Natural killer cell (primary cell): ENCODE measurements at regions of chr11 and their contacts with region 1.

Region 1: DNA sequence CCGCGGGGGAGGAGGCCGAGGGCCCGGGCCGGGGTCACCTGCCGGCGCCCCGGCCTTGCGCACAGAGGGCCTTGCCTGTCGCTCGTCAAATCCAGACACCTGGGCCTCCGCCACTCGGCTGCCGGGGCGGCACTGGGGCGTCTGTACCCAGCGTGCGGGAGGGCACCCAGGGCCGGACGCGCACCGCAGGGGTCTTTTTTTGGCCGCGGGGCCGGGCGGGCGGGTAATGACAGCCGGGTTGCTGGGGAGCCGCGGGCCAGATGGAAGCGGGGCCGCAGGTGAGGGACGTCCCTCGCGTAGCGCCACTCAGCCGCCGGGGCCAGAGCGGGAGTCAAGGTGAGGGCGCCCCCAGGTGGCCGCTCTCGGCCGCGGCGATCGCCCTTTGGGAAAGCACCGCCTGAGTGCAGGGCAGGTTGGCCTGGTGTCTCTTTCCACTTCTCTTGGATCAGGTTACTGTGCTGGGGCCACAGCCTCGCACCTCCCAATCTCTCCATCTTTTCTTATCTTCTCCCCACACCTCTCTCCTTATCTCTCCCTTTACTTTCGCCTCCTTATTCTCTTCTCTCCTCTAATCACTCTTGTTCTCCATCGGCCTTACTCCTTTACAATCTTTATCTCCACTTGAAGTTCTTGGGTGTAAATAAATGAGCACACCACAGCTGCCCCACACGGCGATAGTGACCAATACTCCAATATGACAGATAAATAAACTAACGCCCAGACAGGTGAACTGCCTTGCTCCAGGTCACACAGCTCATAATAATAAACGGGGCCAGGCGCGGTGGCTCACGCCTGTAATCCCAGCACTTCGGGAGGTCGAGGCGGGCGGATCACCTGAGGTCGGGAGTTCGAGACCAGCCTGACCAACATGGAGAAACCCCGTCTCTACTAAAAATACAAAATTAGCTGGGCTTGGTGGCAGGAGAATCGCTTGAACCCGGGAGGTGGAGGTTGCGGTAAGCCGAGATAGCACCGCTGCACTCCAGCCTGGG is 3.7 kb downstream of the PHLDB1 start:
- DNase-seq: peak; percentile 87 to 92
- ATAC-seq: peak; percentile 46 to 72 (median 65)
- H3K4me3 ChIP-seq: no peak overlapping the region
- H3K4me3 Mint-ChIP-seq: peak overlapping the region; percentile 62
- H3K27ac ChIP-seq: no peak overlapping the region
- H3K27ac Mint-ChIP-seq: peak overlapping the region in 1 of 2 donors; percentile 50
- H3K4me1 ChIP-seq: peaks cover 37% of the 10 kb centered on the region
- H3K4me1 Mint-ChIP-seq: peaks cover 23 to 34% of the 10 kb centered on the region in 2 donors
- H3K27me3 ChIP-seq: peaks cover 8% of the 10 kb centered on the region
- H3K27me3 Mint-ChIP-seq: peaks cover 8 to 31% of the 10 kb centered on the region in 2 donors
- CTCF ChIP-seq: peak; percentile 86

Region 2: DNA sequence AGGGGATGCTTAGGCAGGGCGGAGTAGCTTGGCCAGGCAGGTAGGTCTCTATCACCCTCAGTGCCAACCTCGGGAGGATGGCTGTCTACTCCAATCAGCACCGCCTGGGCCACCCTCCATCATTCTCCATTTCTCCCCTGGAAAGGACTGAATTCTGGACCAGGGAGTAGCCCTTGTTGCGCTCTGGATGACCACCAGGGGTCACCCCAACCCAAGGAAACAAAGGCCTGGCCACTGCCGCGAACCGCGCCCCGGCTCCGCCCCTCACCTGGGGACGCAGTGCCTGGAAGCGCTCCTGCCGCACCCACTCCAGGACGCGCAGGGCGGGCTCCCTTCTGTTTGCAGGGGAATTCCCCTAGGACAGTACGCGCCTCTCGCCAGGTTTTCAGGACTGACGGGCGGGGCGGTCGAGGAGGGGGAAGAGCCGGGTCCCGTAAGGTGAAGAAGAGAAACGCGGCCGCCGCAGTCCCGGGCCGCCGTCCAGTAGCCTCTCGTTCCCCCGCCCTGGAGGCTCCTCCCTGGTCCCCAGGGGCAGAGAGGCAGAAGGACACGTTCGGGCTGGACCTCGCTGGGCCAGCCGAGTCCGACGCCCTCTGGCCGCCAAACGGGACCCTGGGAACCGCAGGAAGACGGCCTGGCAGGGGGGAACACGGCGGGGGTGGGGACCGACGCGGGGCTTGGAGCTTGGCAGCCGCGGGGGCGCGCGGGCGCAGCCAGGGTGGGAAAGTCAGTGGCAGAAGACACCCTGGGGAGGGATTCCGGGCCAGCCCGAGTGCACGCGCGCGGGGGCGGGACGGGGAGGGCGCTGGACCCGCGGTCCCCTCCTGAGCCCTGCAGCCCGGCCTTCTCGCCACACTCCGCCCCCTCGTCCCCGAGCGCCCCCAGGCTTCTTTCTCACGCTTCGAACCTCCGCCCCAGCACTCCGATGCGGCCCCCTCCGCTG is 465.5 kb before region 1 on chr11:
- intact Hi-C with region 1: loop called (anchors 2 kb)
- DNase-seq: peak; percentile 69 to 93
- ATAC-seq: peak; percentile 88 to 95 (median 94)
- H3K4me3 ChIP-seq: peak overlapping the region; percentile 63
- H3K4me3 Mint-ChIP-seq: peak overlapping the region; percentile 82
- H3K27ac ChIP-seq: no peak overlapping the region
- H3K27ac Mint-ChIP-seq: no peak overlapping the region
- H3K4me1 ChIP-seq: peaks cover 10% of the 10 kb centered on the region
- H3K4me1 Mint-ChIP-seq: peaks cover 0 to 4% of the 10 kb centered on the region in 2 donors
- H3K27me3 ChIP-seq: peaks cover 2% of the 10 kb centered on the region
- H3K27me3 Mint-ChIP-seq: peaks cover 47 to 72% of the 10 kb centered on the region in 2 donors
- CTCF ChIP-seq: peak; percentile 89

Region 3: GRCh38 chr11:118572061-118572980 is 38.8 kb before region 1 on chr11 and contains the start of gene ARCN1:
- intact Hi-C with region 1: loop called (anchors 5 kb)
- DNase-seq: peak; percentile 68 to 90
- ATAC-seq: peak; percentile 83 to 91 (median 89)
- H3K4me3 ChIP-seq: peak within 1 kb of the TSS; percentile 77
- H3K4me3 Mint-ChIP-seq: peak within 1 kb of the TSS; percentile 95
- H3K27ac ChIP-seq: peak within 1 kb of the TSS; percentile 98
- H3K27ac Mint-ChIP-seq: peak within 1 kb of the TSS; percentile 89 to 97
- H3K4me1 ChIP-seq: peaks cover 14% of the 10 kb centered on the region
- H3K4me1 Mint-ChIP-seq: peaks cover 46 to 47% of the 10 kb centered on the region in 2 donors
- H3K27me3 ChIP-seq: no peaks in the 10 kb centered on the region
- H3K27me3 Mint-ChIP-seq: no peaks in the 10 kb centered on the region
- CTCF ChIP-seq: no peak
- total RNA-seq, gene ARCN1: 72.9 to 88.6 (median 88.4) TPM

Region 4: DNA sequence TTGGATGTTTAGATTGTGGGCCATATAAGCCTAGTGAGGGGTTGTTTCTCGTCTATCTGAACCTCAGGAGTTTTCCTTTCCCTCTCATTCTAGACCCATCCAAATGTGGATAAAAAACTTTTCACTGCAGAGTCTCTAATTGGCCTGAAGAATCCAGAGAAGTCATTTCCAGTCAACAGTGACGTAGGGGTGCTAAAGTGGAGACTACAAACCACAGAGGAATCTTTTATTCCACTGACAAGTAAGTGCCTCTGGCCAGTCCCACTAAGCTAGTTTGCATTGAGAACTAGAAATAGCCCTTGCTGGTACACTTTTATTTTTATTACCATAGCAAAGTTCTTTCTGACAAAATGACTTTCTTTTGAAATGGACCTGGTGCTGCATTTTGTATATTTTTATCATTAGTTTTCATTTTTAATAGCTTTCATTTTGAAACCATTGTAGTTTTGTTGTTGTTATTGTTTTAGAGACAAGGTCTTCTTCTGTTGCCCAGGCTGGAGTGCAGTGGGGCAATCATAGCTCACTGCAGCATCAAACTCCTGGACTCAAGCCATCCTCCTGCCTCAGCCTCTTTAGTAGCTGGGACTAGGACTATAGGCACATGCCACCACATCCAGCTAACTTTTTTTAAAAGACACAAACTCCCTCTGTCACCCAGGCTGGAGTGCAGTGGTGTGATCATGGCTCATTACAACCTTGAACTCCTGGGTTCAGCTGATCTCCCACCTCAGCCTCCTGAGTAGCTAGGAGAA is 18.3 kb before region 1 on chr11:
- intact Hi-C with region 1: loop called (anchors 1 kb)
- DNase-seq: no peak
- ATAC-seq: no peak
- H3K4me3 ChIP-seq: no peak overlapping the region
- H3K4me3 Mint-ChIP-seq: no peak overlapping the region
- H3K27ac ChIP-seq: no peak overlapping the region
- H3K27ac Mint-ChIP-seq: peak overlapping the region in 1 of 2 donors; percentile 19
- H3K4me1 ChIP-seq: no peaks in the 10 kb centered on the region
- H3K4me1 Mint-ChIP-seq: peaks cover 6 to 7% of the 10 kb centered on the region in 2 donors
- H3K27me3 ChIP-seq: no peaks in the 10 kb centered on the region
- H3K27me3 Mint-ChIP-seq: no peaks in the 10 kb centered on the region
- CTCF ChIP-seq: no peak